GM12878 (cell line): ENCODE measurements at regions of chr1 and their contacts with region 1.

Region 1: GRCh38 chr1:100459358-100460114 is 78.4 kb upstream of the GPR88 start:
- DNase-seq: peak; percentile 55
- ATAC-seq: peak; percentile 96
- H3K4me3 ChIP-seq: no peak overlapping the region
- H3K27ac ChIP-seq: no peak overlapping the region
- H3K4me1 ChIP-seq: peaks cover 4% of the 10 kb centered on the region; the same call in 1 of the 2 replicates
- H3K27me3 ChIP-seq: no peaks in the 10 kb centered on the region
- CTCF ChIP-seq: peak; percentile 83 to 96 (median 87)
- EP300 ChIP-seq: no peak
- POLR2A ChIP-seq: no peak
- RAD21 ChIP-seq: peak; percentile 98

Region 2: DNA sequence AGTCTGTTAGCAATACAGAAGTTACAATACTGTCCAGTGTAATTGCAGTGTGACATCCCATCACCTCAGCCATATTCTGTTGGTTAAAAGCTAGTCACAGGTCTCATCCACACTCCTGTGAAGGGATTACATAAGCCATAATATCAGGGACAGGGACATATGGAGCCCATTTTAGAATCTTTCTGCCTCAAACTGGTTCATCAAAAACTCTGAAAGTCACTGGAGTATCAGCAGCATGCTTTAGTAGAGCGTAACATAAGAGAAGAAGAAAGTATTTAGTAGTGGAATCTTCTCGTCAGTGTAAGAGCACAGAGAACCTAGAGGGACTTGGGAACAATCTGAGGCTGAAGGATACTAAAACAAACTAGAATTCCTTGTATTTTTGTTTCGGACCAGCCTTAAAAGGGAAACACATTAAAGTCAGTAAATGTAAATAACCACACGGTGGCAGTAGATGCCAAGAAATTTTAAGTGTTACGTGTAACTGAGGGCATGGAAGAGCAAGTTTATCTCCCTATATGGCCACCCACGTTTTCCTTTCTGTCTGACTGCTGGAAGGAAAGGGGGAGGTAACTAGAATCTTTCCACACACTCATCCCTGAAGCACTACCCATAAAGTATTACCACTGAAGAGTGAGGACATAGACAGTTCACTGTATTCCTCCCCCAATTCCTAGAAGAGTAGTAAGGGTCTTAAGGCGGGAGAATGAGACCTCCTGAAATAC is 651.0 kb before region 1 on chr1:
- CTCF ChIA-PET with region 1: interaction called, 32 read pairs
- POLR2A ChIA-PET with region 1: no interaction called
- RAD21 ChIA-PET with region 1: interaction called, 7 read pairs
- SMC1A ChIA-PET with region 1: interaction called, 9 read pairs
- in situ Hi-C with region 1: loop called (anchors 5 kb)
- intact Hi-C with region 1: loop called (anchors 1 kb)
- DNase-seq: peak; percentile 79
- ATAC-seq: peak; percentile 96
- H3K4me3 ChIP-seq: no peak overlapping the region
- H3K27ac ChIP-seq: peak overlapping the region; percentile 67
- H3K4me1 ChIP-seq: peaks cover 10% of the 10 kb centered on the region
- H3K27me3 ChIP-seq: no peaks in the 10 kb centered on the region
- CTCF ChIP-seq: peak; percentile 24 to 72 (median 55); a peak in 5 of 6 replicates
- EP300 ChIP-seq: no peak
- POLR2A ChIP-seq: no peak
- RAD21 ChIP-seq: peak; percentile 85

Region 3: DNA sequence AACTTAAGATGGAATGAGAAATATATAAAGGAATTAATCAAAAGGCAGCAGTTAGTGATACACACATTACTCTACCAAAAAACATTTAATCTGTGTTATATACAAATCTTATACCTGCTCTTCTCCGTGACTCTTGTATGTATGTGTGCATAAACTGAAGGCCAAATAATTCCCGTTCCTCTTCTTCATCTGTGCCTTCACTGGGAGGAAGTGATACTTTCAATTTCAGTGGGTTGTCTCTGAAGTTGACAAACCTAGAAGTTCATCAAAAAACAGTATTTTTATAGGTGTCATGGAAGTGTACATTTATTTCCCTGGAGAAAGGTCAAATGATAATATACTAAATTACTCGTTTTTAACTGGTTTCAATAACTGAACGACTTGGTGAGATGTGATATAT is 307.3 kb before region 1 on chr1:
- CTCF ChIA-PET with region 1: interaction called, 17 read pairs
- POLR2A ChIA-PET with region 1: no interaction called
- RAD21 ChIA-PET with region 1: no interaction called
- SMC1A ChIA-PET with region 1: interaction called, 4 read pairs
- in situ Hi-C with region 1: no loop called
- intact Hi-C with region 1: loop called (anchors 5 kb)
- DNase-seq: no peak
- ATAC-seq: peak; percentile 93
- H3K4me3 ChIP-seq: no peak overlapping the region
- H3K27ac ChIP-seq: no peak overlapping the region
- H3K4me1 ChIP-seq: peaks cover 8% of the 10 kb centered on the region
- H3K27me3 ChIP-seq: no peaks in the 10 kb centered on the region
- CTCF ChIP-seq: no peak
- EP300 ChIP-seq: no peak; a peak in 1 of 4 replicates
- POLR2A ChIP-seq: no peak
- RAD21 ChIP-seq: no peak

Region 4: DNA sequence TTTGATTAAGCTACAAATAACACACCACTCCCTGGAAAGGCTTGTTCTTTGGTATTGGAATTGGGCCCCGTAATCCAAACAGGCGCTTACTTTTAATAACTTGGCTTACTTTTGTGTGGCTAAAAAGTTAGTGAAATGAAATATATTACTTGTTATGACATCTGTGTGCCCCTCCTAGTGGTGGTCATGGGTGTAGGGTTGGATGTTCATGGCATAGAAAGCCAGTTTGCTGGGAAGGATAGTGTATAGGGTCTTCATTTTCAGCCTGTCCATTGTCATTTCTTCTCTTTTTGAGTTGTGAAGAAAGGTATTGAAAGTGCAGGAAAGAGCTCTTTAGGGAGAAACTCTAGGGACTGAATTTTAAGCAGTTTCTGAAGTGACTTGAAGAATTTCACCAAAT is 101.3 kb before region 1 on chr1:
- CTCF ChIA-PET with region 1: interaction called, 129 read pairs
- POLR2A ChIA-PET with region 1: interaction called, 4 read pairs
- RAD21 ChIA-PET with region 1: interaction called, 23 read pairs
- SMC1A ChIA-PET with region 1: interaction called, 17 read pairs
- in situ Hi-C with region 1: no loop called
- intact Hi-C with region 1: loop called (anchors 5 kb)
- DNase-seq: no peak
- ATAC-seq: peak; percentile 57
- H3K4me3 ChIP-seq: no peak overlapping the region
- H3K27ac ChIP-seq: no peak overlapping the region
- H3K4me1 ChIP-seq: no peaks in the 10 kb centered on the region
- H3K27me3 ChIP-seq: no peaks in the 10 kb centered on the region
- CTCF ChIP-seq: peak; percentile 47 to 57 (median 47); a peak in 5 of 6 replicates
- EP300 ChIP-seq: no peak
- POLR2A ChIP-seq: no peak
- RAD21 ChIP-seq: peak; percentile 48; the same call in 1 of the 2 replicates

Region 5: GRCh38 chr1:100449477-100449876 is 10.1 kb before region 1 on chr1:
- CTCF ChIA-PET with region 1: interaction called, 61 read pairs
- POLR2A ChIA-PET with region 1: no interaction called
- RAD21 ChIA-PET with region 1: no interaction called
- SMC1A ChIA-PET with region 1: interaction called, 14 read pairs
- in situ Hi-C with region 1: no loop called
- intact Hi-C with region 1: no loop called
- DNase-seq: no peak
- ATAC-seq: peak; percentile 83
- H3K4me3 ChIP-seq: no peak overlapping the region
- H3K27ac ChIP-seq: no peak overlapping the region
- H3K4me1 ChIP-seq: no peaks in the 10 kb centered on the region; the same call in 1 of the 2 replicates
- H3K27me3 ChIP-seq: no peaks in the 10 kb centered on the region
- CTCF ChIP-seq: no peak
- EP300 ChIP-seq: no peak; a peak in 2 of 4 replicates
- POLR2A ChIP-seq: no peak
- RAD21 ChIP-seq: no peak

Region 6: GRCh38 chr1:100523038-100523652 is 63.6 kb after region 1 on chr1:
- CTCF ChIA-PET with region 1: interaction called, 4 read pairs
- POLR2A ChIA-PET with region 1: no interaction called
- RAD21 ChIA-PET with region 1: interaction called, 3 read pairs
- SMC1A ChIA-PET with region 1: interaction called, 6 read pairs
- in situ Hi-C with region 1: no loop called
- intact Hi-C with region 1: loop called (anchors 5 kb)
- DNase-seq: peak; percentile 21
- ATAC-seq: peak; percentile 94
- H3K4me3 ChIP-seq: no peak overlapping the region
- H3K27ac ChIP-seq: no peak overlapping the region
- H3K4me1 ChIP-seq: peaks cover 11% of the 10 kb centered on the region
- H3K27me3 ChIP-seq: no peaks in the 10 kb centered on the region
- CTCF ChIP-seq: no peak
- EP300 ChIP-seq: 0 out of 4 replicates have a peak, but pooled peaks of 1 of the 2 experiments have one; percentile 27
- POLR2A ChIP-seq: no peak
- RAD21 ChIP-seq: no peak

Region 7: GRCh38 chr1:100866041-100866900 is 406.7 kb after region 1 on chr1:
- CTCF ChIA-PET with region 1: interaction called, 261 read pairs
- POLR2A ChIA-PET with region 1: no interaction called
- RAD21 ChIA-PET with region 1: interaction called, 90 read pairs
- SMC1A ChIA-PET with region 1: interaction called, 62 read pairs
- in situ Hi-C with region 1: no loop called
- intact Hi-C with region 1: loop called (anchors 1 kb)
- DNase-seq: no peak
- ATAC-seq: peak; percentile 87
- H3K4me3 ChIP-seq: no peak overlapping the region
- H3K27ac ChIP-seq: no peak overlapping the region
- H3K4me1 ChIP-seq: peaks cover 9% of the 10 kb centered on the region; the same call in 1 of the 2 replicates
- H3K27me3 ChIP-seq: no peaks in the 10 kb centered on the region
- CTCF ChIP-seq: peak; percentile 35 to 64 (median 53); a peak in 5 of 6 replicates
- EP300 ChIP-seq: no peak
- POLR2A ChIP-seq: no peak
- RAD21 ChIP-seq: peak; percentile 68